ENCODE measurements at regions of chr14 and their contacts with region 1.

Region 1: GRCh38 chr14:89416002-89416995 is 734 bp downstream of the FOXN3 start:
- DNase-seq: peak; percentile 99 to 100
- ATAC-seq: peak; percentile 85 to 94 (median 90)
- H3K4me3 ChIP-seq: peak overlapping the region; percentile 70 to 98 (median 92)
- H3K27ac ChIP-seq: peak overlapping the region; percentile 92 to 97 (median 96)
- H3K4me1 ChIP-seq: peaks cover 9 to 49% (median 33%) of the 10 kb centered on the region in 9 donors
- H3K27me3 ChIP-seq: no peaks in the 10 kb centered on the region
- CTCF ChIP-seq: no peak

Region 2: GRCh38 chr14:89085737-89086382 is 330.4 kb before region 1 on chr14:
- intact Hi-C with region 1: loop called in 1 of 10 experiments (anchors 5 kb)
- DNase-seq: peak; percentile 21 to 62
- ATAC-seq: peak in 7 of 8 donors; percentile 69 to 89 (median 84)
- H3K4me3 ChIP-seq: no peak overlapping the region
- H3K27ac ChIP-seq: peak overlapping the region in 5 of 10 donors; percentile 2 to 40 (median 13)
- H3K4me1 ChIP-seq: peaks cover 0 to 11% (median 4%) of the 10 kb centered on the region in 9 donors
- H3K27me3 ChIP-seq: no peaks in the 10 kb centered on the region
- CTCF ChIP-seq: no peak

Region 3: DNA sequence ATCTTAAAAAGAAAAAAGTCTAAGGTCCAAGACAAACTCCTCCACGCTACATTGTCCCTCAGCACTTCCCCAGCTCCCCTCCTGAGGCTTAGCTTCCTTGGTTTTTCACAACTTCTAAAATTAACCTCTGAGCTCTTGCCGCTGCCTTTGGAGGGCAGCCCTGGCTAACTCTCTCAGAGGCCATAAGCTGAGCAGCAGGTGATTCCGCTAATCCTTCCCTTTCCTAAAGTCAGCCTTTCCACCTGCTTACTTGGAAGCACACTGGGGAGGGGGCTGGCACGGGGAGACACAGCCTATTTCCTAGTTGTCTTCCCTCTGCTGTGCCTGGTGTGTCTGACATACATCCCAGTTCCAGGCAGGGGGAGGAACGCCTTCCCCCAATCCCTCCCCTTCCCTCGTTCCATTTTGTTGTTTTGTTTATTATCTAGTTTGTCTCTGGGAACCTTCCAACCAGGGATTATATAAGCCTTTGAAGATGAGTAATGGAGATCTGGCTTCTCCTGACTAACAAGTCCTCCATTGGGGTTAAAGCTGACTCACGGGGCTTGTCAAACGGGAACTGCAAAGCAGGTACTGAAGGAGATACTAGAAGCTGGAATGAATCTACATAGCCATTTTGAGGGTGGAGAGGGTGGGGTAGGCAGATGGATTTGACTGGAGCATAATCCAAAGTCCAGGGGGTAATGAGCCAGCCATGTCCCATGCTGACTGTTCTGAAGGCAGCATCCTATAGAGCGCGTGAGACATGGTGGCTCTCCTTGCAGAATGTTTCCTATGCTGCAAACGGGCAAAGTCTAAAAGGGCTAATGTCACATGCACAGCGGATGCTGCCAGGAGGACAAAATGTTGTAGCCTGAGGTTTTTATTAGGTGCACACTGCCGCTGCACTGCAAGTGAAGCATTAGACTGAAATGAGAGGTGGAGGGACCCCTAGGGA is 230.1 kb before region 1 on chr14:
- intact Hi-C with region 1: loop called in 2 of 10 experiments (anchors 5 kb)
- DNase-seq: no peak
- ATAC-seq: peak; percentile 43 to 84 (median 72)
- H3K4me3 ChIP-seq: no peak overlapping the region
- H3K27ac ChIP-seq: peak overlapping the region in 9 of 10 donors; percentile 11 to 77 (median 66)
- H3K4me1 ChIP-seq: peaks cover 10 to 48% (median 40%) of the 10 kb centered on the region in 9 donors
- H3K27me3 ChIP-seq: no peaks in the 10 kb centered on the region
- CTCF ChIP-seq: peak in 3 of 9 donors; percentile 24 to 29 (median 26)

Region 4: GRCh38 chr14:89226801-89227495 is 189.4 kb before region 1 on chr14:
- intact Hi-C with region 1: loop called in 1 of 10 experiments (anchors 5 kb)
- DNase-seq: no peak
- ATAC-seq: no peak
- H3K4me3 ChIP-seq: no peak overlapping the region
- H3K27ac ChIP-seq: peak overlapping the region in 1 of 10 donors; percentile 51
- H3K4me1 ChIP-seq: peaks cover 4 to 47% (median 26%) of the 10 kb centered on the region in 9 donors
- H3K27me3 ChIP-seq: no peaks in the 10 kb centered on the region
- CTCF ChIP-seq: no peak

Region 5: GRCh38 chr14:89276424-89276975 is 139.8 kb before region 1 on chr14:
- intact Hi-C with region 1: no loop called
- DNase-seq: no peak
- ATAC-seq: peak in 2 of 8 donors; percentile 14 to 27
- H3K4me3 ChIP-seq: no peak overlapping the region
- H3K27ac ChIP-seq: no peak overlapping the region
- H3K4me1 ChIP-seq: peaks cover 0 to 36% (median 15%) of the 10 kb centered on the region in 9 donors
- H3K27me3 ChIP-seq: no peaks in the 10 kb centered on the region
- CTCF ChIP-seq: no peak

Region 6: GRCh38 chr14:89613260-89614008 is 197.1 kb after region 1 on chr14:
- intact Hi-C with region 1: loop called in 7 of 10 experiments (anchors 1 to 10 kb)
- DNase-seq: no peak
- ATAC-seq: no peak
- H3K4me3 ChIP-seq: no peak overlapping the region
- H3K27ac ChIP-seq: peak overlapping the region in 2 of 10 donors; percentile 28 to 41
- H3K4me1 ChIP-seq: peaks cover 6 to 64% (median 40%) of the 10 kb centered on the region in 9 donors
- H3K27me3 ChIP-seq: no peaks in the 10 kb centered on the region
- CTCF ChIP-seq: no peak

Region 7: DNA sequence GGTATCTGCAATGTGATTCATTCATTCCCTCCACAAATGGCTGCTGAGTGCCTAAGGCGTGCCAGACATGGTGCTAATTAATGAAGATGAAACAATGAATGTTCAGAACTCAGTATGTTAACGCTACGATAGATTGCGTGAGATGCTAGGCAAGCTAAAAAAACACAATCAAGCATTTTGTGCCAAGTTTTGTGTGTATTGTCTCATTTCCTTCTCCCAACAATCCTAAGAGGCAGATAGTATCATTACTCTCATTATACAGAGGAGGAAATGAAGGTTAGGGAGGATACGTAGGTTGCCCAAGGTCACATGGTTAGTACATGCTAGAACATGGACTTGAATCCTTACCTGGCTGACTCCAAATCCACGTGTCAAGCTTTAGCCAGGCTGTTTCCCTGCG is 273.8 kb after region 1 on chr14:
- intact Hi-C with region 1: no loop called
- DNase-seq: no peak
- ATAC-seq: peak in 6 of 8 donors; percentile 58 to 87 (median 78)
- H3K4me3 ChIP-seq: no peak overlapping the region
- H3K27ac ChIP-seq: no peak overlapping the region
- H3K4me1 ChIP-seq: no peaks in the 10 kb centered on the region
- H3K27me3 ChIP-seq: no peaks in the 10 kb centered on the region
- CTCF ChIP-seq: no peak

Region 8: GRCh38 chr14:89701211-89702043 is 285.1 kb after region 1 on chr14:
- intact Hi-C with region 1: loop called in 4 of 10 experiments (anchors 2 to 10 kb)
- DNase-seq: peak; percentile 92
- ATAC-seq: peak; percentile 92 to 98 (median 97)
- H3K4me3 ChIP-seq: peak overlapping the region; percentile 14 to 70 (median 64)
- H3K27ac ChIP-seq: peak overlapping the region; percentile 71 to 90 (median 86)
- H3K4me1 ChIP-seq: peaks cover 2 to 22% (median 17%) of the 10 kb centered on the region in 9 donors
- H3K27me3 ChIP-seq: no peaks in the 10 kb centered on the region
- CTCF ChIP-seq: no peak

Region 9: DNA sequence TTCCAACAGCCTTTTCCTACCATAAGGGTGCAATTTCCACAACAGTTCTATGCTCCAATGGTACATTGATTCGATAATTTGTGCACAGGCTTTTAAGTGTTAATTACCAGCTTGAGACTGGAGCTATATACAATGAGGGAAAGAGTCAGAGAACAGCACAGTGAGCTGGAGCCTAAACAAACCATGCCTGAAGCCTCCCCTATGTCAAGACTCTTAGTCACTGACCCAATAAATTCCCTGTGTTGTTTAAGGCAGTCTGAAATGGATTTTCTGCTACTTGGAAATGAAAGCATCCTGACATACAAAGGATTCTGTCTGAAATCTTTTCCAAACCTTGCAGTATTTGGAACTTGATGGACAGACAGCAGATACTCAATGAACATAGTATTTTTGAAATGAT is 389.2 kb after region 1 on chr14:
- intact Hi-C with region 1: no loop called
- DNase-seq: no peak
- ATAC-seq: no peak
- H3K4me3 ChIP-seq: no peak overlapping the region
- H3K27ac ChIP-seq: no peak overlapping the region
- H3K4me1 ChIP-seq: peaks cover 0 to 8% (median 0%) of the 10 kb centered on the region in 9 donors
- H3K27me3 ChIP-seq: no peaks in the 10 kb centered on the region
- CTCF ChIP-seq: no peak

Region 10: DNA sequence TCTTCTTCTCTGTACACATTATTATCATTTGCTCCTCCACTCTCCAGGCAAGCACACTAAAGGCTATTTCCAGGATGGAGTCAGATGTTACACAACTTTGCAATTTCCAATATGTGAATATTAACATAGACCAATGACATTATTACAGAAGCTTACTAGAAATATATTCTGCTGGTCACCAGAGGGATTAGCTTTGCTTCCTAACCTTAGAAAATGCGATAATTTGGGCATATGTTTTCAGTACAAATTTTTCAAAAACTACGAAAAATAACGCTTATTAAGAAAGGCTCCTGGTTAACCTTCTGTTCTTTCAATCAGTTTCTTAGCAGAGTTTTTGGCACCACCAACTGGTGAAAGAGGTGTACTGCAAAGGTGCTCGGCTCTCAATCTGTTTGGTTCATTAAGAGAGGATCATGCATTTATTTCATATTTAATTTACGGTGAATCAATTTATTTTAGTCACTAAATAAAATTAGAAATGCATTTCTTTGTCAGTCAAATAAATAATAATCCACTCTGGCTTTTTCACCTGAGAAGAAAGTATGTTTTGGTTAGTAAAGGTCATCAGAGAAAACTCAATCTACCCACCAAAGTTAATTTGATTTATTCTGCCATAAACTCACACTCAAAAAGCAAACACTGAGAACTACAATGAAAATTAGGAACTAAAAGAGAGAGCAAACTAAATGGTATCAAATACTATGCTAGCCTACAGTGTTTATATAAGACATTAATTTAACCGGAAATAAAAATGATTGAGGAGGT is 499.0 kb after region 1 on chr14:
- intact Hi-C with region 1: loop called in 1 of 10 experiments (anchors 10 kb)
- DNase-seq: peak in 1 of 2 donors; percentile 41
- ATAC-seq: peak in 3 of 8 donors; percentile 36 to 65 (median 63)
- H3K4me3 ChIP-seq: no peak overlapping the region
- H3K27ac ChIP-seq: no peak overlapping the region
- H3K4me1 ChIP-seq: peaks cover 0 to 14% (median 0%) of the 10 kb centered on the region in 9 donors
- H3K27me3 ChIP-seq: no peaks in the 10 kb centered on the region
- CTCF ChIP-seq: peak; percentile 89 to 98 (median 96)

Measured in heart right ventricle (tissue), 16 donors.